ENCODE measurements at regions of chr22 and their contacts with region 1.

Region 1: DNA sequence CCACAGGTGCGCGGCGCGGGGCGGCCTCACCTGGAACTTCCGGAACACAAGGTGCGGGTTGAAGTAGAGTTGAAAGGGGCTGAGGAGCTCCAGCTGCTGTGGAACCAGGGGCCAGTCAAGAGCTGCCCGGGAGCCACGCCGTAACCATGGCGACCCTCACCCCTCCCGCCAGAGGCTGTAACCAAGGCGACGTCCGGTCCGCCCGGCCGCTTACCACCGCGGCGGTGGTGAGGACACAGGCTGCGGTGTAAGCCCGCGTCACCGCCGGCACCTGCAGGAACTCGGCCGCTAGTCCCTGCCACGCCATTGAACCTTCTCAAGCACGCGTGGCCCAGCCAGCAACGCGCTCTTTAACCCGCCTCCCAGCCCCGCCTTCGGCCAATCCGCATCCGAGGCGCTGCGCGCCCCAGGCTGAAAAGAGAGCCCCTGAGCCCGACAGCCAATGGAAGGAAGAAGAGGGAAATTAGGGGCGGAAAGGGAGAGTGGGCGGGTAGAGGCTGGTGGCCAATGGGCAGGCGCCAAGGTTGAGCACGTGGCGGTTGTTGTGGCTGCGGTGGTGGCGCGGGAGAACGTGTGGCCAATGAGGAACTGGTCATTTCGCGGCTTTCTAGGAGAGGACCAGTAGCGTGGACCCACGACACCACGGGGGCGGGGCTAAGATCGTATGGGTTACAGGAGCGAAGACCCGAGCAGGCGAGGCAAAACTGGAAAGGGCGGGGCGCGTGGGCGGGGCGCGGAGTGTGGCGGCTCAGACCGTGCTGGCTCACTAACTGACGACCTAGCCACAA is at the start of gene DERL3:
- DNase-seq: peak; percentile 80 to 97 (median 92)
- ATAC-seq: peak; percentile 94
- H3K4me3 ChIP-seq: peak within 1 kb of the TSS; percentile 70
- H3K4me3 Mint-ChIP-seq: peak within 1 kb of the TSS; percentile 81 to 96 (median 93)
- H3K27ac ChIP-seq: peak within 1 kb of the TSS; percentile 51
- H3K27ac Mint-ChIP-seq: peak within 1 kb of the TSS; percentile 43 to 97 (median 87)
- H3K4me1 ChIP-seq: peaks cover 4 to 5% of the 10 kb centered on the region in 2 donors
- H3K4me1 Mint-ChIP-seq: peaks cover 12 to 26% (median 20%) of the 10 kb centered on the region in 7 donors
- H3K27me3 ChIP-seq: no peaks in the 10 kb centered on the region
- H3K27me3 Mint-ChIP-seq: peaks cover 0 to 7% (median 0%) of the 10 kb centered on the region in 5 donors
- total RNA-seq, gene DERL3: 1.6 to 16.2 (median 6.5) TPM

Region 2: DNA sequence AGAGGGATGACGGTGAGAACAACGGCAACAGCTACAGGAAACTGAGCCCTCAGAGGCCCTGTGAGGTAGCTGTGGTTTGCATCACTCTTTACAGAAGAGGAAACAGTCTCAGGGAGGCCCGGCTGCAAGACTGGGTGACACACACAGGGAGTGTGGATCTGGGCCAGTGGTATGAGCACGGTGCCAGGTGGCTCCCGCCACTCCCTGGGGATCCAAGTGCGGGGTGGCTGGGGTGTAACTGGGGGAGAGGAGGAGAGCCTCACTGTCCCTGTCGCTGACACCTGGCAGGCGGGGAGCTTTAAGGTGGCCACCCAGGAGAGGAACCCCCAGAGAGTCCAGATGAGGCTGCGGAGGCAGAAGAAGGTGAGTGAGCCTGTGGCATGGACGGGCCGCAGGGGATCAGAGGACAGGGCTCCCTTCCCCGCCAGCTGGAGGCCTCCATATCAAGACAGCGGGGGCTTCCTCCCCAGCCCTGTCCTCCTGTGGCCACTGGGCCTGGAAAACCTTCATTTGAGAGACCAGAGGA is 142.5 kb before region 1 on chr22:
- CTCF ChIA-PET with region 1: no interaction called
- POLR2A ChIA-PET with region 1: no interaction called
- intact Hi-C with region 1: loop called in 1 of 2 experiments (anchors 1 kb)
- DNase-seq: peak; percentile 60 to 91 (median 86)
- ATAC-seq: peak; percentile 99
- H3K4me3 ChIP-seq: peak overlapping the region; percentile 71
- H3K4me3 Mint-ChIP-seq: peak overlapping the region; percentile 94 to 100 (median 98)
- H3K27ac ChIP-seq: peak overlapping the region; percentile 99
- H3K27ac Mint-ChIP-seq: peak overlapping the region; percentile 99 to 100 (median 100)
- H3K4me1 ChIP-seq: peaks cover 28 to 38% of the 10 kb centered on the region in 2 donors
- H3K4me1 Mint-ChIP-seq: peaks cover 37 to 64% (median 51%) of the 10 kb centered on the region in 7 donors
- H3K27me3 ChIP-seq: no peaks in the 10 kb centered on the region
- H3K27me3 Mint-ChIP-seq: no peaks in the 10 kb centered on the region

Region 3: GRCh38 chr22:23750714-23751440 is 88.0 kb before region 1 on chr22 and contains the start of gene ZNF70:
- CTCF ChIA-PET with region 1: no interaction called
- POLR2A ChIA-PET with region 1: no interaction called
- intact Hi-C with region 1: loop called in 1 of 2 experiments (anchors 1 kb)
- DNase-seq: peak; percentile 78 to 88 (median 86)
- ATAC-seq: peak; percentile 99
- H3K4me3 ChIP-seq: peak within 1 kb of the TSS; percentile 79
- H3K4me3 Mint-ChIP-seq: peak within 1 kb of the TSS; percentile 63 to 88 (median 82)
- H3K27ac ChIP-seq: peak within 1 kb of the TSS; percentile 73
- H3K27ac Mint-ChIP-seq: peak within 1 kb of the TSS; percentile 37 to 91 (median 76)
- H3K4me1 ChIP-seq: peaks cover 0 to 9% of the 10 kb centered on the region in 2 donors
- H3K4me1 Mint-ChIP-seq: peaks cover 11 to 18% (median 13%) of the 10 kb centered on the region in 7 donors
- H3K27me3 ChIP-seq: no peaks in the 10 kb centered on the region
- H3K27me3 Mint-ChIP-seq: no peaks in the 10 kb centered on the region
- total RNA-seq, gene ZNF70: 3.1 to 7.9 (median 4.0) TPM

Region 4: DNA sequence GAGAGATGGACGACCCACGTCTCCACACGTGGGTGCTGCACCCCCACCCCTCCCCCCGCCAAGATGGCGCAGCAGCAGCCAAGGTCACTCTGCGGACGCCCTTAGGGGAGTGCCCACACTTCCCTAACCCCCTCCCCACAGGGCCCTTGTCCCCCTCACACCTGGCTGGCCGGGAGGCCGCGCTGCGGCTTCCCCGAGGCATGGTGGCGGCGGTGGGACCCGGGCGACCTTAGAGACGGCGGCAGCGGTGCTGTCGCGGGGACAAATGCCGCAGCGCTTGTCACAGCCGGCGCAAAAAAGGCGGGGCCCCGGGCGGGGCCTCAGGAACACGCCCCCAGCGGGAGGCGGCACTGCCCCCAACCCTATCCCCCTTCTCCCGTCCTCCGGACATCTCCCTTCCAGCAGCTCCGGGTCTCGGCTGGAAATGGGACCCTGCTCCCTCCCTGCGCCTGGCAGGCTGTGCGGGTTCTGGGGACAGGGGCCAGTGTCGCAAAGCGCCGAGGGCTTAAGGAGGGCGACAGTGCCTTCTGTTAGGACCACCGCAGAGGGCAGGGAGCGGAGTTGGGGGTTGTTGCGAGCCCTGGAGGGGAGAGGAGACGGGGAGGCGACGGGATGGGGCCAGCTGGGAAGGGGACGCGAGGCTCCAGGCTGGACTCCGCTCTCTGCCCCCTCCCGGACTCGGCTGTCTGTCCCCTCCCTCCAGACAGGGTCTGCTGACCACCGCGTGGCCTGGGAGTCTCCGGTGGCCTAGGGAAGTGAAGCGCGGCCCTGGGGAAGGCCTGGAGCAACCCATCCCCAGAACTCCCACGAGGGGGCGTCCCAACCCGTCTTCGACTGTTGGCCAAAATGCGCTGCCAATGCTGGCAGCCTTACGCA is 71.0 kb before region 1 on chr22 and contains the start of gene CHCHD10:
- CTCF ChIA-PET with region 1: no interaction called
- POLR2A ChIA-PET with region 1: no interaction called
- intact Hi-C with region 1: loop called (anchors 1 to 2 kb)
- DNase-seq: peak; percentile 63 to 84 (median 75)
- ATAC-seq: peak; percentile 80
- H3K4me3 ChIP-seq: peak within 1 kb of the TSS; percentile 92
- H3K4me3 Mint-ChIP-seq: peak within 1 kb of the TSS; percentile 63 to 88 (median 83)
- H3K27ac ChIP-seq: peak within 1 kb of the TSS; percentile 85
- H3K27ac Mint-ChIP-seq: peak within 1 kb of the TSS in 8 of 9 donors; percentile 42 to 82 (median 64)
- H3K4me1 ChIP-seq: peaks cover 27 to 37% of the 10 kb centered on the region in 2 donors
- H3K4me1 Mint-ChIP-seq: peaks cover 3 to 52% (median 38%) of the 10 kb centered on the region in 7 donors
- H3K27me3 ChIP-seq: no peaks in the 10 kb centered on the region
- H3K27me3 Mint-ChIP-seq: peaks cover 0 to 4% (median 0%) of the 10 kb centered on the region in 5 donors
- total RNA-seq, gene CHCHD10: 38.2 to 56.1 (median 46.4) TPM

Region 5: DNA sequence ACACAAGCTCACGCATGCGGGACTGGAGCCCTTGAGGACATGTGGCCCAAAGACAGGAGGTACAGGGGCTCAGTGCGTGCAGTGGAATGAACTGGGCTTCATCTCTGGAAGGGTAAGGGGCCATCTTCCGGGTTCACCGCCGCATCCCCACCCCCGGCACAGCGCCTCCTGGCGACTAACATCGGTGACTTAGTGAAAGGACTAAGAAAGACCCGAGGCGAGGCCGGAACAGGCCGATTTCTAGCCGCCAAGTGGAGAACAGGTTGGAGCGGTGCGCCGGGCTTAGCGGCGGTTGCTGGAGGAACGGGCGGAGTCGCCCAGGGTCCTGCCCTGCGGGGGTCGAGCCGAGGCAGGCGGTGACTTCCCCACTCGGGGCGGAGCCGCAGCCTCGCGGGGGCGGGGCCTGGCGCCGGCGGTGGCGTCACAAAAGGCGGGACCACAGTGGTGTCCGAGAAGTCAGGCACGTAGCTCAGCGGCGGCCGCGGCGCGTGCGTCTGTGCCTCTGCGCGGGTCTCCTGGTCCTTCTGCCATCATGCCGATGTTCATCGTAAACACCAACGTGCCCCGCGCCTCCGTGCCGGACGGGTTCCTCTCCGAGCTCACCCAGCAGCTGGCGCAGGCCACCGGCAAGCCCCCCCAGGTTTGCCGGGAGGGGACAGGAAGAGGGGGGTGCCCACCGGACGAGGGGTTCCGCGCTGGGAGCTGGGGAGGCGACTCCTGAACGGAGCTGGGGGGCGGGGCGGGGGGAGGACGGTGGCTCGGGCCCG is 55.3 kb after region 1 on chr22 and contains the start of gene MIF:
- CTCF ChIA-PET with region 1: no interaction called
- POLR2A ChIA-PET with region 1: interaction called, 3 read pairs
- intact Hi-C with region 1: loop called (anchors 1 kb)
- DNase-seq: peak; percentile 88 to 100 (median 94)
- ATAC-seq: peak; percentile 96
- H3K4me3 ChIP-seq: peak within 1 kb of the TSS; percentile 88
- H3K4me3 Mint-ChIP-seq: peak within 1 kb of the TSS; percentile 88 to 97 (median 94)
- H3K27ac ChIP-seq: peak within 1 kb of the TSS; percentile 93
- H3K27ac Mint-ChIP-seq: peak within 1 kb of the TSS; percentile 92 to 100 (median 97)
- H3K4me1 ChIP-seq: peaks cover 16% of the 10 kb centered on the region in 2 donors
- H3K4me1 Mint-ChIP-seq: peaks cover 12 to 39% (median 30%) of the 10 kb centered on the region in 7 donors
- H3K27me3 ChIP-seq: no peaks in the 10 kb centered on the region
- H3K27me3 Mint-ChIP-seq: no peaks in the 10 kb centered on the region
- total RNA-seq, gene MIF: 179 to 1,010 (median 197) TPM

Region 6: DNA sequence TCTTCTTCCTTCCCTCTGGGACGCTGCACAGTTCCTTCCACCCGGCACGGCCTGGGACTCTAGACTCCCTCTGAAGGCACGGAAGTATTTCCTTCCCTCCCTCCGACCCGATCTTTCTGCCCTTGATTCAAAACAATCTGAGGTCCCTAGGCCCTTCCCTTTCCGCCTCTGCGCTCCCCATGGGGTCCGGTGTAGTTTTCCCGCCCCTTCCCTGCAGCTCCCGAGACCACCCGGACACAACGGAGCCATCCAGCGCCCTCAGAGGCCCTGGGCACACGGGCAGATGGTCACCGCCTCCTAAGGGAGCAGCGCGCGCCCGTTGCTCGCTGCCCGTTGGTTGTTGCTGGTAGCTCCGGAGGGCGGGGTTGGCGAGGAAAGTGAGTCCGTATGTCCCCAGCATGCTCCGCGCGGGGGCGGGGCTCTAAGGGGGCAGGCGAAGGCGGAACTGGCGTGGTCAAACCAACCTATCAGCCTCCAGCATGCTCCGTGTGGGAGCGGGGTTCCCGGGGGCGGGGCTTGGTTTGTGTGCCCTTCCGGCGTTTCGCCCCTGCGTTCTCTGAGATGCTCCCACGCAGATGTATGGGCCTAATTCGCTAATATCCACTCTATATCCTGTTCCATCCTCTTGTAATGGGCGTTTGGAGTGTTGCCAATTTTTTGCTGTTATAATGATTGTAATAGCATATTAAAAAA is 74.9 kb after region 1 on chr22:
- CTCF ChIA-PET with region 1: no interaction called
- POLR2A ChIA-PET with region 1: no interaction called
- intact Hi-C with region 1: loop called in 1 of 2 experiments (anchors 1 kb)
- DNase-seq: peak; percentile 94 to 100 (median 97)
- ATAC-seq: peak; percentile 100
- H3K4me3 ChIP-seq: peak overlapping the region; percentile 83
- H3K4me3 Mint-ChIP-seq: peak overlapping the region; percentile 84 to 97 (median 93)
- H3K27ac ChIP-seq: peak overlapping the region; percentile 78
- H3K27ac Mint-ChIP-seq: peak overlapping the region; percentile 89 to 99 (median 98)
- H3K4me1 ChIP-seq: peaks cover 0 to 7% of the 10 kb centered on the region in 2 donors
- H3K4me1 Mint-ChIP-seq: peaks cover 7 to 34% (median 16%) of the 10 kb centered on the region in 7 donors
- H3K27me3 ChIP-seq: no peaks in the 10 kb centered on the region
- H3K27me3 Mint-ChIP-seq: peaks cover 0 to under 1% (median 0%) of the 10 kb centered on the region in 5 donors

Region 7: DNA sequence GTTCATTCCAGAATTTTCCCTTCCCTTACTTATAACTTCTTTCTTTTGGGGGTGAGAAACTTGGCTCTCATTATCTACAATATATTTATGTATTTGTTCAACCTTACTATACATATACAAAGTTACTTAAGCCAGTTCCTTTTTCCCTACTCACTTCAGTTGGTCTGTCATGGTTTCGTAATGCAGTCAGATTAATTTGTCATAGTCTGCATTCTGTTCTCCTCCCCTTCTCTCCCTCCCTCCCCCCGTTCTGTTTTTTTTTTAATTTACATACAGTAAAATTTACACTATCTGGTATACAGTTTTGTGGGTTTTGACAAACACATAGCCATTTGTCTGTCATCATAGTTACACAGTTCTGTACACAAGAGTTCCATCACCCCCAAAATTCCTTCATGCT is 516.7 kb after region 1 on chr22:
- CTCF ChIA-PET with region 1: no interaction called
- POLR2A ChIA-PET with region 1: no interaction called
- intact Hi-C with region 1: no loop called
- DNase-seq: no peak
- ATAC-seq: peak; percentile 70
- H3K4me3 ChIP-seq: no peak overlapping the region
- H3K4me3 Mint-ChIP-seq: no peak overlapping the region
- H3K27ac ChIP-seq: no peak overlapping the region
- H3K27ac Mint-ChIP-seq: peak overlapping the region in 1 of 9 donors; percentile 7
- H3K4me1 ChIP-seq: no peaks in the 10 kb centered on the region
- H3K4me1 Mint-ChIP-seq: peaks cover 0 to 21% (median 4%) of the 10 kb centered on the region in 7 donors
- H3K27me3 ChIP-seq: no peaks in the 10 kb centered on the region
- H3K27me3 Mint-ChIP-seq: no peaks in the 10 kb centered on the region

Measured in naive thymus-derived CD4-positive, alpha-beta T cell (primary cell).